CD8-positive, alpha-beta T cell (primary cell): ENCODE measurements at regions of chr15 and their contacts with region 1.

Region 1: GRCh38 chr15:101303408-101303807 is 8.4 kb upstream of the SNRPA1 start:
- DNase-seq: peak in 1 of 9 experiments; percentile 40
- ATAC-seq: no peak
- H3K4me3 ChIP-seq: no peak overlapping the region
- H3K4me3 Mint-ChIP-seq: no peak overlapping the region
- H3K27ac ChIP-seq: no peak overlapping the region
- H3K27ac Mint-ChIP-seq: no peak overlapping the region
- H3K4me1 ChIP-seq: peaks cover 4% of the 10 kb centered on the region
- H3K4me1 Mint-ChIP-seq: no peaks in the 10 kb centered on the region
- H3K27me3 ChIP-seq: no peaks in the 10 kb centered on the region
- H3K27me3 Mint-ChIP-seq: no peaks in the 10 kb centered on the region
- CTCF ChIP-seq: no peak

Region 2: DNA sequence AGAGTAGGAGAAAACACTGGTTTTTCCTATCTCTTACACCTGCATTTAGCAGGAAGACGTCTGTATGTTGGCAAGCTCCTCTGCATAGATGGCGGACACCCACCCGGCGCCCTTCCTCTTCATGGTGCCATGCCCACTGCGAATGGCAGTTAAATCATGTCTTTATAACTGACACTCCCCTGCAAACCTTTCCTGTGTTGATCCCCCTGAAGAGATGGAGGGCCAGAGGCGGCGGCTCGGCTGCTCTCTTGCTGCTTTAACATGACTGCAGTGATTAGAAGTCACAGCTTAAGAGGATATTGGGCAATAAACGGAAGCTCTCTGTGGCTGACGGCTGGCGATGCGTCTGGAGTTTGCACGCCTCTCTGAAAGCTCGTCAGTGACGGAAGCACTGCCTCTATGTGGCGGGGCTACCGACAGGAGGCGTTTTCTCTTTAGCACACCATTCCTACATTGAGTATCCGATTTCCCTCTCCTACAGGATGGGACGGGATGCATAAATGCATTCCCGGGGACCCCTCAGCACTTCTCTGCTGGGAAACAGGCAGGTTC is 17.2 kb after region 1 on chr15:
- CTCF ChIA-PET with region 1: interaction called, 14 read pairs
- POLR2A ChIA-PET with region 1: interaction called, 6 read pairs
- intact Hi-C with region 1: no loop called
- DNase-seq: peak; percentile 29 to 88 (median 63)
- ATAC-seq: peak; percentile 98
- H3K4me3 ChIP-seq: peak overlapping the region; percentile 45 to 46
- H3K4me3 Mint-ChIP-seq: peak overlapping the region; percentile 78
- H3K27ac ChIP-seq: peak overlapping the region; percentile 46 to 85
- H3K27ac Mint-ChIP-seq: peak overlapping the region; percentile 93
- H3K4me1 ChIP-seq: peaks cover 10% of the 10 kb centered on the region
- H3K4me1 Mint-ChIP-seq: peaks cover 13% of the 10 kb centered on the region
- H3K27me3 ChIP-seq: no peaks in the 10 kb centered on the region
- H3K27me3 Mint-ChIP-seq: peaks cover 5% of the 10 kb centered on the region
- CTCF ChIP-seq: peak; percentile 57

Region 3: DNA sequence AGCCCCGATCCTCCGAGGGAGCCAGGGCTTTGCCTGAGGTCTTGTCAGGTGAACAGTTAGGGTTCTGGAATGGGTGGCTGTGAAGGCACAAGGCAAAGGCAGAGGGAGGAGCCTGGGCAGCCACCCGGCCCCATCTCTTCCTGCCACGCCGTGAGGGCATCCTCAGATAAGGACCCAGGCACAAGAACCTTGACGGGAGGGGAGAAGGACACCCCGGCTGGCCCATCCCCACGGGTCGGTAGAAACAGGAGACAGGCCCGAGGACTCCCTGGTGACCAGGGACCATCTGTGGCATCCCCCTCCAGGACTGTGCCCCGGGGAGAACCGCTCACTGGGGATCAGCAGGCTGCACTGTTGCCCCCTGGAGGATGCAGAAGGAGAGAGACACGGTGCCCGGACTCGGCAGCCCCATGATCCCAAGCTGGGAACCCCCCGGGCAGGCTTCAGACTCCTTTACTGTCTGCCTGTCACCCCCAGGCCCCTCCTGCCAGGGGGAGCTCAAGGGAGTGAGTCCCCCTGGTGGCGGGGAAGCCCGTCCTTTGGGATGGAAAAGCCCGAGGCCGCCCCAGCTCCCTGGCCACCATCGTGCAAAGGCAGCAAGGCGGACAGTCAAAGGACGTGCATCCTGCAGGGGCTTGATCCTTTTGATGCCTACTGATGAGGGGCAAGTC is 198.4 kb after region 1 on chr15:
- CTCF ChIA-PET with region 1: interaction called, 16 read pairs
- POLR2A ChIA-PET with region 1: no interaction called
- intact Hi-C with region 1: loop called in 1 of 2 experiments (anchors 1 kb)
- DNase-seq: peak; percentile 5 to 71 (median 51)
- ATAC-seq: peak; percentile 88
- H3K4me3 ChIP-seq: peak overlapping the region; percentile 7 to 29
- H3K4me3 Mint-ChIP-seq: peak overlapping the region; percentile 66
- H3K27ac ChIP-seq: no peak overlapping the region
- H3K27ac Mint-ChIP-seq: no peak overlapping the region
- H3K4me1 ChIP-seq: peaks cover 14% of the 10 kb centered on the region
- H3K4me1 Mint-ChIP-seq: peaks cover 18% of the 10 kb centered on the region
- H3K27me3 ChIP-seq: no peaks in the 10 kb centered on the region
- H3K27me3 Mint-ChIP-seq: peaks cover 40% of the 10 kb centered on the region
- CTCF ChIP-seq: peak; percentile 28